ENCODE measurements at regions of chr5 and their contacts with region 1.

Region 1: GRCh38 chr5:119063579-119064379 is 7.1 kb upstream of the DMXL1 start:
- DNase-seq: peak in 1 of 2 experiments; percentile 28
- H3K4me3 ChIP-seq: no peak overlapping the region
- H3K4me3 Mint-ChIP-seq: peak overlapping the region; percentile 3
- H3K27ac Mint-ChIP-seq: no peak overlapping the region
- H3K4me1 ChIP-seq: peaks cover 24% of the 10 kb centered on the region; the same call in 1 of the 2 replicates
- H3K4me1 Mint-ChIP-seq: peaks cover 14% of the 10 kb centered on the region
- H3K27me3 ChIP-seq: no peaks in the 10 kb centered on the region
- H3K27me3 Mint-ChIP-seq: no peaks in the 10 kb centered on the region
- CTCF ChIP-seq: no peak

Region 2: DNA sequence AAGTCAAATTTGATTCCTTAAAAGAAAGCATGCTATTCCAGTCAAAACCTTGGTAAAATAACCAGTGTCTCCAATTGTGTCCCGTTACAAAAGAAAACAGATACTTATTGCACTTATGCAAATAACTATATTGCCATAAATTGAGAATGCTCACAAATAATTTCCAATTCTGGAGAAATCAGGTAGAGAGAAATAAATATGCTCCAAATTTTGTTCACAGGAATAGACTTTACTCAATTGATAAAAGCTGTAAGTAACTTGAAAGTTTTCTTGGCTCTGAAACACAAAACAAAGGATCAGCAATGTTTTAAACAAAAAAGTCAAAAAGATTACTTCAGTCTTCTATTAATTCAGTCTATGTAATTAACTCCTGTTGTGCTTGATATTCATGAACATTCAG is 67.7 kb before region 1 on chr5:
- CTCF ChIA-PET with region 1: no interaction called
- POLR2A ChIA-PET with region 1: no interaction called
- intact Hi-C with region 1: no loop called
- DNase-seq: no peak
- H3K4me3 ChIP-seq: no peak overlapping the region
- H3K4me3 Mint-ChIP-seq: no peak overlapping the region
- H3K27ac Mint-ChIP-seq: no peak overlapping the region
- H3K4me1 ChIP-seq: no peaks in the 10 kb centered on the region
- H3K4me1 Mint-ChIP-seq: no peaks in the 10 kb centered on the region
- H3K27me3 ChIP-seq: no peaks in the 10 kb centered on the region
- H3K27me3 Mint-ChIP-seq: no peaks in the 10 kb centered on the region
- CTCF ChIP-seq: no peak

Region 3: GRCh38 chr5:119009131-119009530 is 54.6 kb before region 1 on chr5:
- CTCF ChIA-PET with region 1: no interaction called
- POLR2A ChIA-PET with region 1: no interaction called
- intact Hi-C with region 1: loop called (anchors 2 kb)
- DNase-seq: peak; percentile 56 to 60
- H3K4me3 ChIP-seq: no peak overlapping the region
- H3K4me3 Mint-ChIP-seq: peak overlapping the region; percentile 38
- H3K27ac Mint-ChIP-seq: peak overlapping the region; percentile 63
- H3K4me1 ChIP-seq: peaks cover 17% of the 10 kb centered on the region
- H3K4me1 Mint-ChIP-seq: peaks cover 23% of the 10 kb centered on the region
- H3K27me3 ChIP-seq: no peaks in the 10 kb centered on the region
- H3K27me3 Mint-ChIP-seq: no peaks in the 10 kb centered on the region
- CTCF ChIP-seq: no peak